ENCODE measurements at regions of chr16 and their contacts with region 1.

Region 1: DNA sequence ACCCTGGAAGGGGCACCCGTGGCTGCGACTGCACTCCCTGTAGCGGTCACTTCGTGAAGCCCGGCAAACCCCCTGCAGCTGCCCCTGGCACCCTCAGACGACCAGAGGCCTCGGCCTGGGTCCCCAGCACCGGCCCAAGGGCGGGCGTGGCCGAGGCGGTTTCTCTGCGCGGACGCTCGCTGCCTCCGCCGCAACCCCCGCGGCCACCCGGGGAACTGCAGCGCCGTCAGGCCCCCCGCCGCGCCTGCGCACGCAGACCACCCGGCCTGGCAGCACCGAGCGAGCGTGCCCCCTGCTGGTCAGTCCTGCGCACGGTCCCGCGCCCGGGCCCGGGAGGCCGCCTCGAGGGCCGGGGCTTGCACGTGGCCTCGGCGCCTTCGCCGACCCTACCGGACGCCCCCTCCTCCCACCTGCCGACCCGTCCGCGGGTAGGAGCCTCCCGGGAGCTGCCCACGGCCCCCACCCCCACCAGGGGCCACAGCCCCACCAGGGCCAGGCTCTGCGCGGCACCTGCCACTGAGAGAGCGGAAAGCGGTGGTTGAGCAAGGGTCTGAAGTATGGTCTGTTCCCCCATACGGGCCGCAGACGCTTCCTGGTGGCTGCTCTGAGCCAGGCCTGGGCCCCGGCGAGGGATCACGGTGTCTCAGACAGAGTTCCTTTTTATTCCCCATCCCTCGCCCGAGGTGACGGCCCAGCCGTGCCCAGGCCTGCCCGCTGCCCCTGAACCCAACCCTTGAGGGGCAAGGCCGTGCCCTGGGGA is 11.5 kb upstream of the HS3ST6 start:
- DNase-seq: peak; percentile 91 to 96 (median 94)
- H3K4me3 ChIP-seq: peak overlapping the region in 2 of 3 donors; percentile 24 to 53
- H3K27ac ChIP-seq: no peak overlapping the region
- H3K4me1 ChIP-seq: no peaks in the 10 kb centered on the region
- H3K27me3 ChIP-seq: no peaks in the 10 kb centered on the region
- CTCF ChIP-seq: peak; percentile 99

Region 2: GRCh38 chr16:1859650-1860049 is 70.1 kb before region 1 on chr16:
- intact Hi-C with region 1: loop called (anchors 10 kb)
- DNase-seq: no peak
- H3K4me3 ChIP-seq: no peak overlapping the region
- H3K27ac ChIP-seq: no peak overlapping the region
- H3K4me1 ChIP-seq: peaks cover 0 to 4% (median 0%) of the 10 kb centered on the region in 3 donors
- H3K27me3 ChIP-seq: peaks cover 4% of the 10 kb centered on the region
- CTCF ChIP-seq: no peak